Dorsolateral prefrontal cortex (tissue), 120 donors: ENCODE measurements at regions of chr16 and their contacts with region 1.

Region 1: GRCh38 chr16:19765860-19766553 is 47.9 kb downstream of the IQCK start:
- DNase-seq: peak; percentile 26 to 88 (median 74)
- H3K4me3 ChIP-seq: peak overlapping the region in 55 of 59 donors; percentile 10 to 60 (median 38)
- H3K27ac ChIP-seq: peak overlapping the region; percentile 49 to 100 (median 94)
- H3K27me3 ChIP-seq: no peaks in the 10 kb centered on the region
- CTCF ChIP-seq: peak in 5 of 56 donors; percentile 2 to 17 (median 5)

Region 2: GRCh38 chr16:19578378-19578971 is 187.5 kb before region 1 on chr16:
- intact Hi-C with region 1: loop called in 1 of 2 experiments (anchors 10 kb)
- DNase-seq: peak; percentile 17 to 95 (median 90)
- H3K4me3 ChIP-seq: peak overlapping the region in 21 of 59 donors; percentile 5 to 41 (median 19)
- H3K27ac ChIP-seq: peak overlapping the region; percentile 73 to 100 (median 97)
- H3K27me3 ChIP-seq: no peaks in the 10 kb centered on the region
- CTCF ChIP-seq: peak in 55 of 56 donors; percentile 25 to 75 (median 55)

Region 3: DNA sequence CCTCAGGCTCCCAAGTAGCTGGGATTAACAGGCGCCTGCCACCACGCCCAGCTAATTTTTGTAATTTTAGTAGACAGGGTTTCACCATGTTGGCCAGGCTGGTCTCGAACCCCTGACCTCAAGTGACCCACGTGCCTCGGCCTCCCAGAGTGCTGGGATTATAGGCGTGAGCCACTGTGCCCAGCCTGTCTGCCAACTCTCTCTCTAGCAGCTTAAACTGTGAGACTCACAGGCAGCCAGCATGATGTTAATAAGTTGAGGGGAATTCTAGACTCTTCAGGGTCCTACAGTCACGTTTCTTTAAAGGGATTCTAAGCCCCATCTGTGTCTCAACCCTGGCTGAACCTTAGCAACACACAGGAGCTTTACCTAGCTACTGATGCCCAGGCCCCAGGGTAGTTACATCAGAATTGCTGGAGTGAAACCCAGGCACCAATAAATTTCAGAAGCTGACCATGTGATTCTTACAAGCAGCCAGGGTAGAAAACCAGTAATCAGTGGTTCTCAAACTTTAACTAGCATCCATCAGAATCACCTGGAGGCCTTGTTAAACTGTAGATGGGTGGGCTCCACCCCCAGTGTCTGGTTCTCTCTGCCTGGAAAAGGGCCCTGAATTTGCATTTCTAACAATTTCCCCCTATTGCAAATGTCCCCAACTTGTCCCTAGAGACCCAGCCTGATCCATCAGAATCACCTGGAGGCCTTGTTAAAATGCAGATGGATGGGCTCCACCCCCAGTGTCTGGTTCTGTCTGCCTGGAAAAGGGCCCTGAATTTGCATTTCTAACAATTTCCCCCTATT is 87.9 kb after region 1 on chr16:
- intact Hi-C with region 1: loop called (anchors 5 kb)
- DNase-seq: peak in 2 of 10 donors; percentile 33 to 42
- H3K4me3 ChIP-seq: no peak overlapping the region
- H3K27ac ChIP-seq: peak overlapping the region in 58 of 59 donors; percentile 11 to 99 (median 95)
- H3K27me3 ChIP-seq: no peaks in the 10 kb centered on the region
- CTCF ChIP-seq: no peak

Region 4: DNA sequence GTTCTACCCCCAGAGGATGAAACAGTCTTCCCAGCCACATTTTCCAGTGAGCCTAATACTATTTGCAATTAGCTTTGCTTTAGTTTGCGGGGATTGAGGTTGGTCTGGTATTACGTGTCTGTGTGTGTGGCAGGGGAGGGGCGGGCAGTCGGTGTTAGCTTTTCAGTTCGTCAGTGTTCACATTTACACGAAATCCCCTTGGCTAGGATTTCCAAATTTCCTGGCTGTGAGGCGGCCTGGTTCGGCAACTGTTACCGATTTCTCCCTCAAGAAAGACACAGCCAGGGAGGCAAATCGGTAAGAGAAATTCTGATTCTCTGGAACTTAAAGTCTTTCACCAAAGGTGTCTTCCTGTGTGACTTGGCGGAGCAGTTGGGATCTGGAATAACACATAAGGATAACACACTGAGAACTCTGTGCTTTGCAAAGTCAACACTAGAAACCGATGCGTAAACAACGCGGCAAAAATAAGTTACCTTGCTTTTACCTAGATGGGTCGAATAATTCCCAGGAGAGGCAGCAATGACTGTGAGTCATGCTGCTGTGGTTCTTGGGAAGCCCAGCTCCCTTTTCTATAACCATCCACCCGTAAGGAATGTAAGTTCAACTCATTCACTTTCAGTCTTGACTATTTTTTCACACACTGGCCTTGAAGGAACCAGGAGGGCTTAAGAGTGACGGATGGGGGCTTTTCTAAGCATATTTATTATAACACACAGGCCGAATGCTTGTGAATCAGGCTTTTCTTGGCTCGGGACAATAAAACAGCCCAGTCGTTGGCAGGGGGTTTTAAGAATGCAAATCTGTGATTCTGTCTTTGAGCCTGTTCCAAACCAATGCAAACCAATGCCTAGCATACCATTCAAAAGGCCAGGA is 94.4 kb after region 1 on chr16:
- intact Hi-C with region 1: loop called in 1 of 2 experiments (anchors 5 kb)
- DNase-seq: peak in 3 of 10 donors; percentile 26 to 29 (median 26)
- H3K4me3 ChIP-seq: peak overlapping the region in 51 of 59 donors; percentile 10 to 60 (median 40)
- H3K27ac ChIP-seq: peak overlapping the region; percentile 43 to 99 (median 97)
- H3K27me3 ChIP-seq: no peaks in the 10 kb centered on the region
- CTCF ChIP-seq: no peak